Gastrocnemius medialis (tissue), 4 donors: ENCODE measurements at regions of chr6 and their contacts with region 1.

Region 1: DNA sequence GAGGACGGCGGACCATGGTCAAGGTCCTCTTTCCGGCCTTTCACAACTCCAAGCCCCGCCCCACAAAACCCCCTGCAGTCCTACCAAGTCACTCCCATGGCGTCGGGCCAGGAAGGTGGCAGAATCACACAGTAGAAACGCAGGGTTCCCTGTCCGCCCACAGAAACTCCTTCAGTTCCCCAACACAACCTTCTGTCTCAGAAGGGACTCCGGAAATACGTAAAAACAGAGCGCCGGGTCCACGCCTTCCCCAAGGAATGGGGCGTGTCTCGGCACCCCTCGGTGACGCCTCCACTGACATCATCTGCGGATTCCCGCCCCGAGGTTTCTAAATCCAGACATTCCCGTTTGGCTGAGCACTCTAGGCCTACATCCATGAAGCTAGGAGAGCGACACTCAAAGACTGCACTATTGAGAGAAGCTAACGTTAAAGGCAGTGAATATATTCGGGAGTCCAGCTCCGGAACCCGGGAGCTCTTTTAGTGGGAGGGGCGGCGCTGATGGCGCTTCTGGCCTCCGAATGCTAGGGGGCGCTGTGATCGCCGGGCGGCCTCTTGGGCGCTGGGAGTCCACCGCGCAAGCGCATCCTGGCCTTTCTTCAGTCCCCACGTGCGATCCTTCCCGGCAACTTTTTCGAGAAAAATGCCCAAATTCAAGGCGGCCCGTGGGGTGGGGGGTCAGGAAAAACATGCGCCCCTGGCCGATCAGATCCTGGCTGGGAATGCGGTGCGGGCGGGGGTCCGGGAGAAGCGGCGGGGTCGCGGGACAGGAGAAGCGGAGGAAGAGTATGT is at the starts of genes BYSL and MED20:
- DNase-seq: peak; percentile 88 to 89
- ATAC-seq: peak; percentile 98 to 99
- H3K4me3 ChIP-seq: peak within 1 kb of the TSS; percentile 75 to 97 (median 86)
- H3K27ac ChIP-seq: peak within 1 kb of the TSS; percentile 93 to 98 (median 96)
- H3K4me1 ChIP-seq: peaks cover 29 to 30% of the 10 kb centered on the region in 2 donors
- H3K27me3 ChIP-seq: no peaks in the 10 kb centered on the region
- CTCF ChIP-seq: peak; percentile 98 to 100 (median 98)
- POLR2A ChIP-seq: peak; percentile 71 to 85
- total RNA-seq, gene BYSL: 8.0 to 16.6 (median 12.9) TPM
- total RNA-seq, gene MED20: 11.5 to 16.5 (median 12.1) TPM

Region 2: GRCh38 chr6:41878246-41878645 is 42.9 kb before region 1 on chr6:
- in situ Hi-C with region 1: no loop called
- intact Hi-C with region 1: no loop called
- DNase-seq: no peak
- ATAC-seq: no peak
- H3K4me3 ChIP-seq: no peak overlapping the region
- H3K27ac ChIP-seq: no peak overlapping the region
- H3K4me1 ChIP-seq: no peaks in the 10 kb centered on the region
- H3K27me3 ChIP-seq: no peaks in the 10 kb centered on the region
- CTCF ChIP-seq: no peak
- POLR2A ChIP-seq: no peak

Region 3: DNA sequence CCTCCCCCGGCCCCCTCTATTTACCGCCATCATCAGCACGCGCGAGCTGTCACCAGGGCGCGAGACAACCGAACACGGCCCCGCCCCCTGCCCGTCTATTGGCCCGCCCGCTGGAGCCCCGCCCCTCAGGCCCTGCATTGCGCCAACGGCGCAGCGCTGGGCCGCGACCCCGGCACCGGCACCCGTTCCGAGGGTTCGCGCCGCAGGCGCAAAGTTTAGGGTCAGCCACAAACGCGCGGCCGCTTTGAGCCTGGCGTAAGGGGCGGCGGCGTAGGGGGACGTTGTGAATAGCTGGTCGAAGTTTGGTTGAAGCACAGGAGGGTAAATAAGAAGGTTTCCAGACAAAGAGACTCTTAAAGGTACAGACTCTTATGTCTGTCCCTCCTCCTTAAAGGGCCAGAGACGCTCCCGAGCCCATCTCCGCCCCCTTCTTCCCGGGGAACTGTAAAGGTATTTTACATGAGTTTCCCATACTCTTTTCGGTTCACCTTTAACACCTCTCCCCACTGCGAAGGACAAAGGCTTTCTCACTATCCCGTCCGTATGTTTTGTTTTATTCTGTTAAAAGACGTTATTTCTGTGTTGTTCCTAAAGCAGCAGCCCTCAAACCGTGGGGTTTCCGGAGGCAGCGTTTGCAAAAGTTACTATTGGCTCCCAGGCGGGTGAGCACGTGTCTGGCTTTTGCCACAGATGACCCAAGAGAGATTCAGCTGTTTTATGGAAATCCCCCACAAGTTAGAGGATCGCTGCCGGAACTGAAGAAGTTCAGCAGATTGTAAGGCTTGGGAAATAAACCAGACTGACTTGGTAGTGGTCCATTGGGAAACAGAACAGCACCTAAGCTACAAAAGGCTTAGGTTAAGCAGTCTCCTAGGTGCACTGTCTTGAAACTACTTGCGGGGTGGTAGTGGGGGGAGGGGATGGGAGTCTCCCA is 25.5 kb before region 1 on chr6 and contains the start of gene USP49:
- in situ Hi-C with region 1: no loop called
- intact Hi-C with region 1: loop called (anchors 1 kb)
- DNase-seq: peak; percentile 83 to 84
- ATAC-seq: peak; percentile 96 to 97
- H3K4me3 ChIP-seq: peak within 1 kb of the TSS; percentile 69 to 91 (median 76)
- H3K27ac ChIP-seq: peak within 1 kb of the TSS; percentile 84 to 91 (median 86)
- H3K4me1 ChIP-seq: peaks cover 8 to 22% of the 10 kb centered on the region in 2 donors
- H3K27me3 ChIP-seq: no peaks in the 10 kb centered on the region
- CTCF ChIP-seq: no peak
- POLR2A ChIP-seq: peak in 1 of 2 donors; percentile 41
- total RNA-seq, gene USP49: 0.27 to 2.8 (median 1.1) TPM

Region 4: DNA sequence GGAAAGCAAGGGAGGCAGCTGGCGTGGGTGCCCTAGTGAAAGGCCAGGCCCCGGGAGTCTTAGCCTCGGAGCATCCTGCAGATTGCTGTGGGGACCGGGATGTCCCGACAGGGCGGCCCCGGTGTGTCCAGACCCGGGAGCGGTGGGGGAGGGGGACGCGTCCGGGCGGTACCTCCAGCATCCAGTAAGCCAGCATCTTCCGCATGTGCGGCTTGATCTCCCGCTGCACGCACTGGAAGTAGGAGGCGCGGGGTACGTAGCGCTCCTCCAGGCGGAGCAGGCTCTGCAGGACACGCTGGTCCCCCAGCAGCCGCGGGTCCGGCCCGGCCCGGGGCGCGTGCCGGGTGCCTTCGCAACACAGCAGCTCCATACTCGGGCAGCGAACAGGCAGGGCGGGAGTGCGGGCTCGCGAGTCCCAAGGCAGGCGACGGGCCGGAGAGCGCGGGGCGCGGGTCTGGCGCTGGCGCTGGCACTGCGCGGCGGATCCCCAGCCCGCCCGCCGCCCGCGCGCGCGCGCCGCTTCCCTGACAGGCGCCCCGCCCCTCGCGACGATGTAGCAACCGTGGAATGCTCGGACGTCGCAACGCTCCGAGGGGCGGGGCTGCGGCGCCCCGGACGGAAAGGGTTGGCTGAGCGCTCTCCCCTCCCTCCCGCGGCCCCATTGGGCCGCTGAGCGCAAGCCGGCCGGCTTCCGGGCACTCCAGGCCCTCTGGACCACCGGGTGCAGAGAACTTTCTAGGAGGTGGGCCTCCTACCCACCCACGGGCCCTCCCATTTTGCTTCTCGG is 20.4 kb after region 1 on chr6 and contains the start of gene CCND3:
- in situ Hi-C with region 1: no loop called
- intact Hi-C with region 1: loop called (anchors 1 kb)
- DNase-seq: peak; percentile 78 to 84
- ATAC-seq: peak; percentile 92 to 94
- H3K4me3 ChIP-seq: peak within 1 kb of the TSS; percentile 66 to 97 (median 72)
- H3K27ac ChIP-seq: peak within 1 kb of the TSS; percentile 67 to 79 (median 74)
- H3K4me1 ChIP-seq: peaks cover 21 to 33% of the 10 kb centered on the region in 2 donors
- H3K27me3 ChIP-seq: no peaks in the 10 kb centered on the region
- CTCF ChIP-seq: peak in 1 of 5 experiments; percentile 16
- POLR2A ChIP-seq: peak; percentile 42 to 46
- total RNA-seq, gene CCND3: 28.9 to 48.7 (median 44.7) TPM

Region 5: DNA sequence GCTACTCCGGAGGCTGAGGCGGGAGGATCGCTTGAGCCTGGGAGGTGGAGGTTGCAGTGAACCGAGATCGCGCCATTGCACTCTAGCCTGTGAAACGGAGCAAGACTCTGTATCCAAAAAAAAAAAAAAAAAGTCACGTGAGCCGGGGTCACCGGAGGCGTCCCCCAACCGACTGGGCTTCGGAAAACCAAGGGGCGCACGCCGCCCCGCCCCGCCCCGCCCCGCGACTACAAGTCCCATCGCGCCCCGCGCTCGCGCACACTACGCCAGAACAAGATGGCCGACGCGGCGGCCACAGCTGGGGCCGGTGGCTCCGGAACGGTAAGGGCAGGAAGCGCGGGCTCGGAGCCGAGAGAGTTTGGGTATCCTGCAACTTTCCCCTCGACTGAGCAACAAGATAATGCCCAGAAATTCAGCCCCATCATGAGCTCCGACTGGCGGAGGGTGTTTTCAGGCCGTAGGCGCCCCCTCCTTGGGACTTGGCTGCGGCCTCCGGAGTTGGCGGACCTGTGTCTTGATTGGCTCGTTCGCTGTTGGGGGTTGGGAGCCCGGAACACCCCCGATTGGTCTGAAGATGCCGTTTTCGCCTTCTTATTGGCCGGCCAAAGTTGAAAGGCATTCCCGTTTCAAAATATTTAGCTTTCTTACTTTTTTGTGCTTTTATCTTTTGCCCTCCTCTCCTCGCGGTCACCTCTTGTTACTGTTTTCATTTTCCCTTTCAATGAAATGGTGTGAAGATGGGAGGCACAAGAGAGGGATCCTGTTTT is 129.3 kb after region 1 on chr6 and contains the start of gene TAF8:
- in situ Hi-C with region 1: no loop called
- intact Hi-C with region 1: loop called (anchors 2 kb)
- DNase-seq: peak; percentile 91
- ATAC-seq: peak; percentile 90 to 92
- H3K4me3 ChIP-seq: peak within 1 kb of the TSS; percentile 67 to 78 (median 71)
- H3K27ac ChIP-seq: peak within 1 kb of the TSS; percentile 89 to 94 (median 92)
- H3K4me1 ChIP-seq: peaks cover 16 to 29% of the 10 kb centered on the region in 2 donors
- H3K27me3 ChIP-seq: peaks cover 0 to 19% (median 0%) of the 10 kb centered on the region in 3 donors
- CTCF ChIP-seq: no peak
- POLR2A ChIP-seq: peak; percentile 75 to 82
- total RNA-seq, gene TAF8: 16.3 to 49.2 (median 35.6) TPM

Region 6: GRCh38 chr6:42217519-42218367 is 296.6 kb after region 1 on chr6 and contains the start of gene MRPS10:
- in situ Hi-C with region 1: loop called in 2 of 4 experiments (anchors 10 to 25 kb)
- intact Hi-C with region 1: loop called (anchors 1 kb)
- DNase-seq: peak; percentile 91 to 94
- ATAC-seq: peak; percentile 100
- H3K4me3 ChIP-seq: peak within 1 kb of the TSS; percentile 73 to 89 (median 84)
- H3K27ac ChIP-seq: peak within 1 kb of the TSS; percentile 81 to 90 (median 86)
- H3K4me1 ChIP-seq: peaks cover 22 to 25% of the 10 kb centered on the region in 2 donors
- H3K27me3 ChIP-seq: no peaks in the 10 kb centered on the region
- CTCF ChIP-seq: no peak
- POLR2A ChIP-seq: peak; percentile 41 to 76
- total RNA-seq, gene MRPS10: 52.2 to 63.7 (median 56.0) TPM

Region 7: DNA sequence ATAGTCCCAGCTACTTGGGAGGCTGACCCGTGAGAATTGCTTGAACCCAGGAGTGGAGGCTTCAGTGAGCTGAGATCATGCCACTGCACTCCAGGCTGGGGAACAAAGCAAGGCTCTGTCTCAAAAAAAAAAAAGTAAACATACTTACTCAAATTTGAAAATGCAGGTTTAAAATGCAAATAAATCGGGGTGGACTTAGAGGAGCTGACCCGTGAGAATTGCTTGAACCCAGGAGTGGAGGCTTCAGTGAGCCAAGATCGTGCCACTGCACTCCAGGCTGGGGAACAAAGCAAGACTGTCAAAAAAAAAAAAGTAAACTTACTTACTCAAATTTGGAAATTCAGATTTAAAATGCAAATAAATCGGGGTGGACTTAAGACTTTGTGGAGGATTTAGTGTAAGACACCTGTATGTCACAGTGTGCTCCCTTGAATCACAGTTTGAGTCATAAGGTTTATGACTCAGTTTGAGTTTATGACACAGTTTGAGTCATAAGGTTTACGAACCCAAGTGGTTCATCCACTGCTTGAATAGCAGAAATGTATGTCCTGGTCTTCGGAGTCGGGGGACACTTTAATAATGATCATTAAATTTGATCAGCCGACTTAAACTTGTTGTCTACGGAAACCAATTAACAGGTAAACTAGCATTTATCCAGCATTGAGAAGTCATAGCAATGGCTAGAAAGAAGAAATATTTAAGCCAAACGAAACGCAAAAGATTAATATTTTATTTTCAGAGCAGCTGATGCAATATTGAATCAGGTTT is 303.3 kb after region 1 on chr6:
- in situ Hi-C with region 1: loop called in 2 of 4 experiments (anchors 10 to 25 kb)
- intact Hi-C with region 1: no loop called
- DNase-seq: no peak
- ATAC-seq: no peak
- H3K4me3 ChIP-seq: no peak overlapping the region
- H3K27ac ChIP-seq: no peak overlapping the region
- H3K4me1 ChIP-seq: no peaks in the 10 kb centered on the region
- H3K27me3 ChIP-seq: no peaks in the 10 kb centered on the region
- CTCF ChIP-seq: no peak
- POLR2A ChIP-seq: no peak

Region 8: DNA sequence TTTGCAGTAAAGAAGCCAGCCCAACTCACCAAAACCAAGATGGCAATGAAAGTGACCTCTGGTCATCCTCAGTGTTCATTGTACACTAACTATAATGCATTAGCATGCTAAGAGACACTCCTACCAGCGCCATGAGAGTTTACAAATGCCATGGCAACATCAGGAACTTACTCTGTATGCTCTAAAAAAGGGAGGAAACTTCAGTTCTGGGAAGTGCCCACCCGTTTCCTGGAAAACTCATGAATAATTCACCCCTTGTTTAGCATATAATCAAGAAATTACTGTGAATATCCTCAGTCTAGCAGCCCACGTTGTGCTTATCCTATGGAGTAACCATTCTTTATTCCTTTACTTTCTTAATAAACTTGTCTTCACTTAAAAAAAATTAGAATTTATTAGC is 550.0 kb after region 1 on chr6:
- in situ Hi-C with region 1: no loop called
- intact Hi-C with region 1: no loop called
- DNase-seq: no peak
- ATAC-seq: no peak
- H3K4me3 ChIP-seq: no peak overlapping the region
- H3K27ac ChIP-seq: no peak overlapping the region
- H3K4me1 ChIP-seq: no peaks in the 10 kb centered on the region
- H3K27me3 ChIP-seq: no peaks in the 10 kb centered on the region
- CTCF ChIP-seq: no peak
- POLR2A ChIP-seq: no peak